CD8-positive, alpha-beta T cell (primary cell): ENCODE measurements at regions of chr4 and their contacts with region 1.

Region 1: GRCh38 chr4:52911684-52912294 is 49.7 kb downstream of the RASL11B start:
- DNase-seq: peak; percentile 15 to 71 (median 61)
- ATAC-seq: no peak
- H3K4me3 ChIP-seq: no peak overlapping the region
- H3K4me3 Mint-ChIP-seq: no peak overlapping the region
- H3K27ac ChIP-seq: no peak overlapping the region
- H3K27ac Mint-ChIP-seq: no peak overlapping the region
- H3K4me1 ChIP-seq: no peaks in the 10 kb centered on the region
- H3K4me1 Mint-ChIP-seq: peaks cover 8% of the 10 kb centered on the region
- H3K27me3 ChIP-seq: no peaks in the 10 kb centered on the region
- H3K27me3 Mint-ChIP-seq: no peaks in the 10 kb centered on the region
- CTCF ChIP-seq: peak; percentile 70

Region 2: GRCh38 chr4:52925531-52925968 is 13.8 kb after region 1 on chr4:
- CTCF ChIA-PET with region 1: interaction called, 11 read pairs
- POLR2A ChIA-PET with region 1: no interaction called
- intact Hi-C with region 1: no loop called
- DNase-seq: no peak
- ATAC-seq: no peak
- H3K4me3 ChIP-seq: no peak overlapping the region
- H3K4me3 Mint-ChIP-seq: no peak overlapping the region
- H3K27ac ChIP-seq: no peak overlapping the region
- H3K27ac Mint-ChIP-seq: no peak overlapping the region
- H3K4me1 ChIP-seq: no peaks in the 10 kb centered on the region
- H3K4me1 Mint-ChIP-seq: no peaks in the 10 kb centered on the region
- H3K27me3 ChIP-seq: no peaks in the 10 kb centered on the region
- H3K27me3 Mint-ChIP-seq: no peaks in the 10 kb centered on the region
- CTCF ChIP-seq: no peak